MCF 10A (cell line): ENCODE measurements at regions of chr3 and their contacts with region 1.

Region 1: GRCh38 chr3:39990532-39990931 is 181.1 kb downstream of the MYRIP start:
- DNase-seq: peak; percentile 80
- H3K4me3 Mint-ChIP-seq: no peak overlapping the region
- H3K27ac Mint-ChIP-seq: no peak overlapping the region
- H3K4me1 Mint-ChIP-seq: no peaks in the 10 kb centered on the region
- H3K27me3 Mint-ChIP-seq: no peaks in the 10 kb centered on the region
- CTCF ChIP-seq: peak; percentile 68

Region 2: GRCh38 chr3:39639344-39640236 is 350.9 kb before region 1 on chr3:
- CTCF ChIA-PET with region 1: no interaction called
- POLR2A ChIA-PET with region 1: no interaction called
- intact Hi-C with region 1: loop called (anchors 2 kb)
- DNase-seq: peak; percentile 92
- H3K4me3 Mint-ChIP-seq: no peak overlapping the region
- H3K27ac Mint-ChIP-seq: peak overlapping the region; percentile 35
- H3K4me1 Mint-ChIP-seq: peaks cover 22% of the 10 kb centered on the region
- H3K27me3 Mint-ChIP-seq: no peaks in the 10 kb centered on the region
- CTCF ChIP-seq: no peak

Region 3: GRCh38 chr3:39668420-39668819 is 322.1 kb before region 1 on chr3:
- CTCF ChIA-PET with region 1: interaction called, 3 read pairs
- POLR2A ChIA-PET with region 1: no interaction called
- intact Hi-C with region 1: loop called (anchors 1 kb)
- DNase-seq: peak; percentile 73
- H3K4me3 Mint-ChIP-seq: no peak overlapping the region
- H3K27ac Mint-ChIP-seq: no peak overlapping the region
- H3K4me1 Mint-ChIP-seq: peaks cover 15% of the 10 kb centered on the region
- H3K27me3 Mint-ChIP-seq: no peaks in the 10 kb centered on the region
- CTCF ChIP-seq: peak; percentile 48

Region 4: GRCh38 chr3:39724233-39724846 is 266.2 kb before region 1 on chr3:
- CTCF ChIA-PET with region 1: interaction called, 3 read pairs
- POLR2A ChIA-PET with region 1: no interaction called
- intact Hi-C with region 1: loop called (anchors 1 kb)
- DNase-seq: no peak
- H3K4me3 Mint-ChIP-seq: no peak overlapping the region
- H3K27ac Mint-ChIP-seq: no peak overlapping the region
- H3K4me1 Mint-ChIP-seq: no peaks in the 10 kb centered on the region
- H3K27me3 Mint-ChIP-seq: no peaks in the 10 kb centered on the region
- CTCF ChIP-seq: peak; percentile 17

Region 5: GRCh38 chr3:39809181-39809994 is 181.1 kb before region 1 on chr3 and contains the start of gene MYRIP:
- CTCF ChIA-PET with region 1: no interaction called
- POLR2A ChIA-PET with region 1: no interaction called
- intact Hi-C with region 1: loop called (anchors 5 kb)
- DNase-seq: peak; percentile 36
- H3K4me3 Mint-ChIP-seq: peak within 1 kb of the TSS; percentile 69
- H3K27ac Mint-ChIP-seq: no peak within 1 kb of the TSS
- H3K4me1 Mint-ChIP-seq: peaks cover 11% of the 10 kb centered on the region
- H3K27me3 Mint-ChIP-seq: peaks cover 24% of the 10 kb centered on the region
- CTCF ChIP-seq: no peak
- total RNA-seq, gene MYRIP: 0.10 and 0.19 TPM in 2 replicates

Region 6: DNA sequence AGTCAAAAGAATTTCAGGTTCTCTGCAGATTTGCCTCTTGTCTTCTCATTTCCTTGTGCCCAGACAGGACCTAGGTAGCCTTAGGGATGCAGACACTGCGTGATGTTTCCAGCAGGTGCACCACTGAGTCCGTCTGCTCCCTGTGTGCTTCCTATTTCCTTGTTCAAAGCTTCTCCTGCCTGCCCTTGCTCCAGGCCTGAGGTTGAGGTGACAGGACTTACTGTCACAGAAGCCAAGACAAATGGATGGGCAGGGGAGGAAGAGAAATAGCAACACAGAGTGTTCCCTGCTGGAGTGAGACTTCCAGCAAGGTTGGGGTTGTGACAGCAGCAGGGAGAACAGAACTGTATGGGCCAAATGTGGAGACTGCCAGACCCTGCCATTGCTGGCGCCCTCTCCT is 18.3 kb after region 1 on chr3:
- CTCF ChIA-PET with region 1: interaction called, 16 read pairs
- POLR2A ChIA-PET with region 1: no interaction called
- intact Hi-C with region 1: no loop called
- DNase-seq: no peak
- H3K4me3 Mint-ChIP-seq: no peak overlapping the region
- H3K27ac Mint-ChIP-seq: no peak overlapping the region
- H3K4me1 Mint-ChIP-seq: no peaks in the 10 kb centered on the region
- H3K27me3 Mint-ChIP-seq: no peaks in the 10 kb centered on the region
- CTCF ChIP-seq: no peak

Region 7: GRCh38 chr3:40086890-40087888 is 96.7 kb after region 1 on chr3:
- CTCF ChIA-PET with region 1: no interaction called
- POLR2A ChIA-PET with region 1: no interaction called
- intact Hi-C with region 1: no loop called
- DNase-seq: no peak
- H3K4me3 Mint-ChIP-seq: no peak overlapping the region
- H3K27ac Mint-ChIP-seq: peak overlapping the region; percentile 14
- H3K4me1 Mint-ChIP-seq: peaks cover 10% of the 10 kb centered on the region
- H3K27me3 Mint-ChIP-seq: no peaks in the 10 kb centered on the region
- CTCF ChIP-seq: no peak

Region 8: DNA sequence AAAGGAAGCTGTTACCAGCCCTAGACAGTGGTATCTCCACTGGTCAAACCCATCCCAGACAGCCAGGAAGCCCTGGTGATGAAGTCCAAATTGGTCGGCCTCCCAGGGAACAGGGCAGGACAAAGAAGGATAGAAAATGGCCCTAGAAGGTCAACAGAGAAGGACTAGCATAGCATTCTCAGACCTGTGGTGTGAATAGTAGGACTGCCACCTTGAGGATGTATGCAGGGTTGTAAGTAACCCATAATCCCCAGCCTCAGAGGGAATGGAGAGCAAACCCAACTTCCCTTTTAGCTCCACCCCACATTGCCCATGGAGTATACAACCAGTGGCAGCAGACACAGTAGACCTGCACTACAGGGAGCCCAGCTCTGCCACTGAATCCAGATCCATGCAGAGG is 250.4 kb after region 1 on chr3:
- CTCF ChIA-PET with region 1: no interaction called
- POLR2A ChIA-PET with region 1: no interaction called
- intact Hi-C with region 1: no loop called
- DNase-seq: no peak
- H3K4me3 Mint-ChIP-seq: no peak overlapping the region
- H3K27ac Mint-ChIP-seq: no peak overlapping the region
- H3K4me1 Mint-ChIP-seq: no peaks in the 10 kb centered on the region
- H3K27me3 Mint-ChIP-seq: no peaks in the 10 kb centered on the region
- CTCF ChIP-seq: no peak